PC-3 (cell line): ENCODE measurements at regions of chr5 and their contacts with region 1.

Region 1: DNA sequence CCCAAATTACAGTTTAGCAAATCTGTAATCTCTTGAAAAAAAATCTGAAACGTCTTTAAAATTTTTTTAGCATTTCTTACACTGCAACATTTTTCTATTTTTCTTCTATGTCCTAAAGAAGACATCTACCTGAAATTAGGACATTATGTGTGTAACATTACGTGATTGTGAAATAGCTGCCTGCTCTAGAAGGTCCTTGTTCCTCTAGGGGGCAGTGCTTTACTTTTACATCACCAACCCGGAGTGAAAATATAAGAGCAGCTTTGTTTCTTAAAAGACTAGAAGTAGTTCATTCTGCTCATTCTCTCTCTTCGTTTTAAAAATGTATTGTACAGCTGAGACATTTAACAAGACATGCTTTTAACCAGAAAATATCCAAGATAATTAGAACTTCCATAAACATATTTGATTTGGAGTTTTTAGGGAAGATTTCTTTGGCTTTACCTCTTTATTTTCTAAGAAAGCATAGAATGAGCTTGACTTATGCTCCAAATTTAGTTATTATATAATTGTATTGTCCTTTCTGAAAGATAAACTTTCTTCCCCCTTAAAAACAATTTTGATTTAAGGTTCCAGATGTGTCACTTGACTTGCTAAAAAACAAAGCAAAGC is 48.1 kb upstream of the RIOK2 start:
- DNase-seq: peak; percentile 79
- ATAC-seq: peak; percentile 81
- H3K4me3 ChIP-seq: no peak overlapping the region
- H3K27ac ChIP-seq: no peak overlapping the region
- H3K4me1 ChIP-seq: peaks cover 6% of the 10 kb centered on the region; the same call in 1 of the 2 replicates
- H3K27me3 ChIP-seq: no peaks in the 10 kb centered on the region
- CTCF ChIP-seq: peak; percentile 92

Region 2: DNA sequence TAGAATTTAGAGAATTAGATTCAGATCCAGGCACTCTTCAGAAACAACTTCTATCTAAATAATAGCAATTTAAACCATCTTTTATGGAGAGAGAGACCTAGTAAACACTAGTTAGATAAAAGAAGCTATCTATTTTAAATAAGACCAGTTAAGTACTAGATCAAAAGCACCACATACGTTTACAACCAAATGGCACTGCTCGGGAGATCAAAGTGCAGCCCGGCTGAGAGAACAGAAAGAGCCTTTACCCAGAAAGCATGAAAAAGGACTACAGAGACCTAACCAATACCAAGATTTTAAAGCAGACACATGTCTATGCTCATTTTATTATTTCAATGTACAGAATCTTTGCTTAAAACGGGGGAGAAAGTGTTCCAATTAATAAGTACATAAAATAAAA is 119.5 kb before region 1 on chr5:
- CTCF ChIA-PET with region 1: no interaction called
- POLR2A ChIA-PET with region 1: no interaction called
- intact Hi-C with region 1: no loop called
- DNase-seq: no peak
- ATAC-seq: no peak
- H3K4me3 ChIP-seq: no peak overlapping the region
- H3K27ac ChIP-seq: no peak overlapping the region
- H3K4me1 ChIP-seq: no peaks in the 10 kb centered on the region
- H3K27me3 ChIP-seq: peaks cover 12% of the 10 kb centered on the region; the same call in 1 of the 2 replicates
- CTCF ChIP-seq: no peak

Region 3: DNA sequence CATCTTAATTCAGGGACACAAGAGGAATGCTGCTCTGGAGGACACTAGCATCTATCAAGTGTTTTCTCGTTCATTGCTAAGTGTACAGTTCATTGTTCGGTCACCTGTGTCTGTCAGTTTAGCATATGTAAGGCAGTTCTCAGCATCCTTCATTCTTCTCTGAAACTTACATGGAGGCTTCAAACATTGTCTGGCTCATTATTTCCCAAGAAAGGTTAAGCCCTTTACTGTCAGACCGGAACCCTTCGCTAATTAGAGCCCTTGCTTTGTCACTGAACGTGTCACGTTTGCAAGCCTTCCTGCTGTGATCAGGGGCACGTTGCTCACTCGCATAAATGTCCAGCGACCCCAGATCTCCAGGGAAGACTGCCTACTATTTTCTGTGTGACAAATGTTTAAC is 14.3 kb after region 1 on chr5:
- CTCF ChIA-PET with region 1: no interaction called
- POLR2A ChIA-PET with region 1: no interaction called
- intact Hi-C with region 1: loop called (anchors 2 kb)
- DNase-seq: no peak
- ATAC-seq: no peak
- H3K4me3 ChIP-seq: no peak overlapping the region
- H3K27ac ChIP-seq: no peak overlapping the region
- H3K4me1 ChIP-seq: 0 out of 2 replicates have a peak, but pooled peaks cover 4% of the 10 kb centered on the region
- H3K27me3 ChIP-seq: no peaks in the 10 kb centered on the region
- CTCF ChIP-seq: no peak

Region 4: GRCh38 chr5:97297063-97297703 is 66.1 kb after region 1 on chr5:
- CTCF ChIA-PET with region 1: no interaction called
- POLR2A ChIA-PET with region 1: no interaction called
- intact Hi-C with region 1: loop called (anchors 2 kb)
- DNase-seq: peak; percentile 72
- ATAC-seq: peak; percentile 85
- H3K4me3 ChIP-seq: no peak overlapping the region
- H3K27ac ChIP-seq: no peak overlapping the region
- H3K4me1 ChIP-seq: no peaks in the 10 kb centered on the region
- H3K27me3 ChIP-seq: no peaks in the 10 kb centered on the region
- CTCF ChIP-seq: peak; percentile 76

Region 5: GRCh38 chr5:97986069-97986468 is 754.9 kb after region 1 on chr5:
- CTCF ChIA-PET with region 1: interaction called, 3 read pairs
- POLR2A ChIA-PET with region 1: no interaction called
- intact Hi-C with region 1: loop called (anchors 10 kb)
- DNase-seq: peak; percentile 85
- ATAC-seq: peak; percentile 87
- H3K4me3 ChIP-seq: no peak overlapping the region
- H3K27ac ChIP-seq: peak overlapping the region; percentile 16
- H3K4me1 ChIP-seq: peaks cover 10% of the 10 kb centered on the region; the same call in 1 of the 2 replicates
- H3K27me3 ChIP-seq: no peaks in the 10 kb centered on the region
- CTCF ChIP-seq: peak; percentile 68

Region 6: DNA sequence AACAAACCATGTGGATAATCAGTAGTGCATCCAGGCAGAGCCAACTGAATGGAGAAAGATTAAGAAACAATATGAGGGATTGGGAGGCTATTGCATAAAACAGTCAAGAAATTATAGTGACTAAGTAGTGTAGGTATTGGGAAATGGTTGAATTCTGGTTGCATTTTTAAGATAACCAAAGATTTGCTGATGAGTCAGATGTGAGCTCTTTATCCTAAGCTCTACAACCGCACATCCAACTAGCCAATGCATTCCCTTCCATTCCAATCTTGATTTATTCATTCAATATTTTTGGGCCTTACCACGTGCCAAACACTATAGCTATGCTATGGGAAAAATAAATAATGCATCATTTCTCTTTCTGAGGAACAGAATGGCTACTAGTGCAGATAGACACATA is 1017.8 kb after region 1 on chr5:
- CTCF ChIA-PET with region 1: no interaction called
- POLR2A ChIA-PET with region 1: no interaction called
- intact Hi-C with region 1: loop called (anchors 5 kb)
- DNase-seq: peak; percentile 80
- ATAC-seq: no peak
- H3K4me3 ChIP-seq: no peak overlapping the region
- H3K27ac ChIP-seq: no peak overlapping the region
- H3K4me1 ChIP-seq: peaks cover 5% of the 10 kb centered on the region; the same call in 1 of the 2 replicates
- H3K27me3 ChIP-seq: no peaks in the 10 kb centered on the region
- CTCF ChIP-seq: no peak

Region 7: DNA sequence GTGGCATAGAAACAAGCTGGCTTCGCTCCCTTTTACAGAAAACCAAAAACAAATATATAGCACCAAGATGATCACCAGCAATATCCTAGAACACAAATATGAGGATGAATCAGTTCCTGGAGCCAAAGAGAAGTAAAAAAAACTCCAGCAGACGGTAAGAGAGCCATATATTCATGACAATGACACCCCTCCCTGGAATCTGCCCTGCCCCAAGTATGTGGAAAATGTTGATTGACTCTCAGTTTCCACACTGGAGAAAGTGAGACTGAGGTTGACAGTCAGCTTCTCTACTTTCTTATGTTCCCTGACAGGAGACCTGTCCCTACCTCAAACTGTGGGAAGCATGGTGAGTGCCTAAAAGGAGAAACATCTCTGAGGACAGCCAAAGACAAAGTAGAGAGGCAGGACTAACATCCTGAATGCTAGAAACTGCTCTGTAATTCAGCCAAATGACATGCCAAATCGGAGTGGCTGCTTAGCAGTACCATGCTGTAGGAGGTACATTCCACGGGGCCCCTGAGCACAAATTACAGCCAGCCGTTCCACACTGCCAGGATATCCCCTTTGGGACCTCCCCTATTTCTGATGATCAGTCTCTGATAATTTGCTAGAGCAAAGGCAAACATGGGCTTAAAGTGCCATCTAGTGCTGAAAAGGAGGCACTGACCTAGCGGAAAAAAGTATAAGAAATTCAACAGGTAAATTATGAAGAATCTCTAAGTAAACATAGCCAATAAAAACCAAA is 1118.3 kb after region 1 on chr5:
- CTCF ChIA-PET with region 1: no interaction called
- POLR2A ChIA-PET with region 1: no interaction called
- intact Hi-C with region 1: loop called (anchors 2 kb)
- DNase-seq: peak; percentile 94
- ATAC-seq: peak; percentile 94
- H3K4me3 ChIP-seq: peak overlapping the region; percentile 34; the same call in 1 of the 2 replicates
- H3K27ac ChIP-seq: peak overlapping the region; percentile 90
- H3K4me1 ChIP-seq: peaks cover 5% of the 10 kb centered on the region; the same call in 1 of the 2 replicates
- H3K27me3 ChIP-seq: no peaks in the 10 kb centered on the region
- CTCF ChIP-seq: peak; percentile 99